HEK293 (cell line): ENCODE measurements at regions of chr2 and their contacts with region 1.

Region 1: GRCh38 chr2:100262555-100263320 is 59.6 kb downstream of the LONRF2 start:
- H3K4me3 ChIP-seq: no peak overlapping the region
- H3K27ac ChIP-seq: no peak overlapping the region
- H3K4me1 ChIP-seq: no peaks in the 10 kb centered on the region
- CTCF ChIP-seq: peak; percentile 71; the same call in 1 of the 2 replicates

Region 2: GRCh38 chr2:100274076-100274475 is 11.3 kb after region 1 on chr2:
- CTCF ChIA-PET with region 1: interaction called, 17 read pairs
- POLR2A ChIA-PET with region 1: no interaction called
- H3K4me3 ChIP-seq: no peak overlapping the region
- H3K27ac ChIP-seq: no peak overlapping the region
- H3K4me1 ChIP-seq: no peaks in the 10 kb centered on the region
- CTCF ChIP-seq: no peak

Region 3: DNA sequence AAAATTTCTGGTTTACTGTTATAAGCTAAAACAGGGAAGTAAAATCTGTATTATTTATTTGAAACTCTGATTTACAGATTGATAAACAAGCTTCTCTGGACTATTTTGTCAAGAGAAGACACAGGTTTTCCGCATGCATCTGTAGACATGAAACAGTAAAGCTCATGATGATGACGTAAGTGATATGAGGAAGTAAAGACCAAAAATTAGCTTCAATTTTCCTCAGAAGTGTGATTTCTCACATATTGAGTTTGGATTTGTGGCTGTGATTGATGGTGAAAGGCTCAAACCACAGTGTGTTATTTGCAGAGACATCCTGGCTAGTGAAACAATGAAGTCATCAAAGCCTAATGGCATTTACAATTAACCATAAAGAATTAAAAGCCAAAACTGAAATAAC is 72.2 kb after region 1 on chr2:
- CTCF ChIA-PET with region 1: interaction called, 11 read pairs
- POLR2A ChIA-PET with region 1: no interaction called
- H3K4me3 ChIP-seq: no peak overlapping the region
- H3K27ac ChIP-seq: no peak overlapping the region
- H3K4me1 ChIP-seq: no peaks in the 10 kb centered on the region
- CTCF ChIP-seq: no peak

Region 4: DNA sequence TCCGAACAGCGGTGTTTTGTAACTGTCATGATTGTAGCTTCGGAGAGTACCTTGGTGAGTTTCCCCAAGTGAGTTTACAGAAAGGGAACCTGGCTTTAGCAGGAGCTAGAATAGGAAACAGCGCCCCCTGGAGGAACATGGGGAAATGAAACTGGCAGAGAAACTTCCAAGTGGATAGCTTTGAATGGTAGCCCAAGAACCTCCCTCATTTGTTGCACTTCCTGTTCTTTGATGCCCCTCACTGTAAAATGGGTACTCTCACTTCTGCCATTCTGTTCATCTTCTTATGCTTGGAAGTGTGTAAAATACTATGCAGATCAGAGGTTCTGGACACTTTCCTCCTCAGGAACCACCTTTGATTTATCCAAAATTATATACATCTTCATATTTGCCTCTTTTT is 118.5 kb after region 1 on chr2:
- CTCF ChIA-PET with region 1: interaction called, 172 read pairs
- POLR2A ChIA-PET with region 1: interaction called, 4 read pairs
- H3K4me3 ChIP-seq: no peak overlapping the region
- H3K27ac ChIP-seq: no peak overlapping the region
- H3K4me1 ChIP-seq: no peaks in the 10 kb centered on the region
- CTCF ChIP-seq: peak; percentile 55

Region 5: DNA sequence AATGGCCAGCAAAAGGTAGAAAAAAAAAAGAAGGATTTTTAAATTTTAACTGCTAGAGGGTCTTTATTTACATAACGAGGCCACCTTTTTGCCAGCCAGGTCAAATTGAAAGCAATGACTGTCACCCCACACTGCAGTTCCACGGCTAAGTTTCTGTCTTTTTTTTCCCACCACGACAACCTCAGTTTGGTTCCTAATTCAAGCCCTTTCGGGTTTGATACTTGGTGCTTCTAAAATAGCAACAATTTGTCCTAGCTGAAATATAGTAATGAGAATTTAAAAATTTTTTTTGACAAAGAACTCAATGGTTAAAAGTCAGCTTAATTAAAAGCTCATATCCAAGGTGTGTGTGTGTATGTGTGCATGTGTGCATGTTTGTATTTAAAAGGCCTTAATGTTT is 191.1 kb after region 1 on chr2:
- CTCF ChIA-PET with region 1: no interaction called
- POLR2A ChIA-PET with region 1: no interaction called
- H3K4me3 ChIP-seq: no peak overlapping the region
- H3K27ac ChIP-seq: no peak overlapping the region
- H3K4me1 ChIP-seq: no peaks in the 10 kb centered on the region
- CTCF ChIP-seq: no peak

Region 6: GRCh38 chr2:100562732-100563720 is 300.3 kb after region 1 on chr2 and contains the start of gene PDCL3:
- CTCF ChIA-PET with region 1: no interaction called
- POLR2A ChIA-PET with region 1: no interaction called
- H3K4me3 ChIP-seq: peak within 1 kb of the TSS; percentile 89
- H3K27ac ChIP-seq: peak within 1 kb of the TSS; percentile 60
- H3K4me1 ChIP-seq: no peaks in the 10 kb centered on the region
- CTCF ChIP-seq: peak; percentile 95